Naive thymus-derived CD4-positive, alpha-beta T cell (primary cell): ENCODE measurements at regions of chr2 and their contacts with region 1.

Region 1: GRCh38 chr2:71410696-71411095 is 42.7 kb upstream of the DYSF start:
- DNase-seq: no peak
- ATAC-seq: no peak
- H3K4me3 ChIP-seq: no peak overlapping the region
- H3K4me3 Mint-ChIP-seq: no peak overlapping the region
- H3K27ac ChIP-seq: no peak overlapping the region
- H3K27ac Mint-ChIP-seq: peak overlapping the region in 5 of 9 donors; percentile 2 to 58 (median 33)
- H3K4me1 ChIP-seq: no peaks in the 10 kb centered on the region
- H3K4me1 Mint-ChIP-seq: peaks cover 0 to 6% (median 4%) of the 10 kb centered on the region in 7 donors
- H3K27me3 ChIP-seq: no peaks in the 10 kb centered on the region
- H3K27me3 Mint-ChIP-seq: no peaks in the 10 kb centered on the region

Region 2: DNA sequence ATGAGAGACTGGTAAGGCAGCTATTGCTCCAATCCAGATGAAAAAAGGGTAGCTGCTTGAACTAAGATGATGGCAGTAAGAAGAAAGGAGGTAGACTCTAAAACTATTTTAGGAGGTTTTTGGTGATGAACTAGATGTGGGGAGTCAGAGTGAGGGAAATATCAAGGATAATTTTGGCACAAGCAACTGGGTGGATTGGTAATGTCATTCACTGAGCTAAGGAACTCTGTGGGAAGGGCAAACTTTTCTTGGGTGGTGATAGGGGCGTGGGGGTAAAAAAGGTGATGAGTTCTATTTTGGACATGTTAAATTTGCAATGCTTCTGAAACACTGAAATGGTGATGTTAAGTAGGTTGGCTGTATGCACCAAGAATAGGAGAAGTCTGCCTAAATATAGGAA is 203.1 kb before region 1 on chr2:
- CTCF ChIA-PET with region 1: no interaction called
- POLR2A ChIA-PET with region 1: no interaction called
- intact Hi-C with region 1: no loop called
- DNase-seq: no peak
- ATAC-seq: no peak
- H3K4me3 ChIP-seq: no peak overlapping the region
- H3K4me3 Mint-ChIP-seq: no peak overlapping the region
- H3K27ac ChIP-seq: no peak overlapping the region
- H3K27ac Mint-ChIP-seq: peak overlapping the region in 1 of 9 donors; percentile 4
- H3K4me1 ChIP-seq: no peaks in the 10 kb centered on the region
- H3K4me1 Mint-ChIP-seq: peaks cover 0 to 5% (median 0%) of the 10 kb centered on the region in 7 donors
- H3K27me3 ChIP-seq: no peaks in the 10 kb centered on the region
- H3K27me3 Mint-ChIP-seq: peaks cover 0 to 11% (median 0%) of the 10 kb centered on the region in 5 donors

Region 3: GRCh38 chr2:71395471-71395870 is 15.2 kb before region 1 on chr2:
- CTCF ChIA-PET with region 1: no interaction called
- POLR2A ChIA-PET with region 1: no interaction called
- intact Hi-C with region 1: no loop called
- DNase-seq: no peak
- ATAC-seq: no peak
- H3K4me3 ChIP-seq: no peak overlapping the region
- H3K4me3 Mint-ChIP-seq: no peak overlapping the region
- H3K27ac ChIP-seq: no peak overlapping the region
- H3K27ac Mint-ChIP-seq: no peak overlapping the region
- H3K4me1 ChIP-seq: no peaks in the 10 kb centered on the region
- H3K4me1 Mint-ChIP-seq: peaks cover 0 to 5% (median 4%) of the 10 kb centered on the region in 7 donors
- H3K27me3 ChIP-seq: no peaks in the 10 kb centered on the region
- H3K27me3 Mint-ChIP-seq: no peaks in the 10 kb centered on the region

Region 4: DNA sequence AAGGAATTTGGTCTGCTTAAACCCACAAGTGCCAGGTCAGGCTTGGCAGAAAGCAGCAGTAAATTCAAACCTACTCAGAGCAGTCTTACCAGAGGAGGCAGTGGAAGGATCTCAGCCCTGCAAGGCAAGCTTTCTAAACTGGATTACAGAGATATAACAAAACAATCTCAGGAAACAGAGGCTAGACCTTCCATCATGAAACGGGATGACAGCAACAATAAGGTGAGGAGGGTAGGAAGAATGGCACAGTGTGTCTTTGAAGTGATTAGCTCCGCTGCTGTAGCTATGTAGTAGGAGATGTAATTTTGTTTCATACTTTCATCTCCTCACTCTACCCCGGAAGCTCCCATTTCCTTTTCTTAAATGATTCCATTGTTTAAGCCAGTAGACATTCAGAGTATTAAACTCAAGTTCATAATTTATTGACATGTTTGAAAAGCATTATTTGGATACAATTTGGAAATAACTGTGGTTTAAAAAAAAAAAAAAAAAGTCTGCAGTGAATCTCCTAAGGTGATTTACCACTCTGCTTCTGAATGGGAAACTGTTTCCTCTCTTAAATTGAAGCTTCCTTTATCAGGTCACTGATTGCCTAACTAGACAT is 13.2 kb after region 1 on chr2:
- CTCF ChIA-PET with region 1: no interaction called
- POLR2A ChIA-PET with region 1: interaction called, 6 read pairs
- intact Hi-C with region 1: loop called in 1 of 2 experiments (anchors 1 kb)
- DNase-seq: no peak
- ATAC-seq: no peak
- H3K4me3 ChIP-seq: no peak overlapping the region
- H3K4me3 Mint-ChIP-seq: no peak overlapping the region
- H3K27ac ChIP-seq: no peak overlapping the region
- H3K27ac Mint-ChIP-seq: peak overlapping the region in 2 of 9 donors; percentile 5 to 18
- H3K4me1 ChIP-seq: no peaks in the 10 kb centered on the region
- H3K4me1 Mint-ChIP-seq: peaks cover 4 to 29% (median 20%) of the 10 kb centered on the region in 7 donors
- H3K27me3 ChIP-seq: no peaks in the 10 kb centered on the region
- H3K27me3 Mint-ChIP-seq: no peaks in the 10 kb centered on the region

Region 5: DNA sequence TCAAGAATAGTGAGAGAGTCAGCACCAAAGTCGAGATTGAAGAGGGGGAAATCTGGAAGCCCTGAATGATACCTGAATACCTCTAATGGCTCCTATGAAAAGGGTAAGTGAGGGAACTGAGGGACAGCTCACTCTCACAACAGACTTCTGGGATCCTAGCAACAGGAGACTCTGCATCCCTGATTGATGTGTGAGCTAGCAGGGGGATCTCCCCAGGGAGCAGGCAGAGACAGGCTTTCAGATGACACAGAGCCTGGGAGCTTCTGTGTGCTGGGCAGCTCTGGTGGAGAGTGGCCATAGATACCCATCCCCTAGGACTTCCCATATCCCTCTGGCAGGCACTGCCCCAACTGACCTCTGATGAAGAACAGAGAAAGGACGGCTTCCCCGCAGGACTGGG is 1208.9 kb after region 1 on chr2:
- CTCF ChIA-PET with region 1: no interaction called
- POLR2A ChIA-PET with region 1: no interaction called
- intact Hi-C with region 1: no loop called
- DNase-seq: no peak
- ATAC-seq: no peak
- H3K4me3 ChIP-seq: no peak overlapping the region
- H3K4me3 Mint-ChIP-seq: no peak overlapping the region
- H3K27ac ChIP-seq: no peak overlapping the region
- H3K27ac Mint-ChIP-seq: no peak overlapping the region
- H3K4me1 ChIP-seq: no peaks in the 10 kb centered on the region
- H3K4me1 Mint-ChIP-seq: peaks cover 0 to 12% (median 6%) of the 10 kb centered on the region in 7 donors
- H3K27me3 ChIP-seq: no peaks in the 10 kb centered on the region
- H3K27me3 Mint-ChIP-seq: no peaks in the 10 kb centered on the region